ENCODE measurements at regions of chr20 and their contacts with region 1.

Region 1: GRCh38 chr20:48921151-48921898 is at the start of gene ARFGEF2:
- DNase-seq: peak; percentile 79 to 99 (median 84)
- ATAC-seq: peak; percentile 96
- H3K4me3 ChIP-seq: peak within 1 kb of the TSS; percentile 99
- H3K4me3 Mint-ChIP-seq: peak within 1 kb of the TSS; percentile 94 to 100 (median 97)
- H3K27ac ChIP-seq: peak within 1 kb of the TSS; percentile 87
- H3K27ac Mint-ChIP-seq: peak within 1 kb of the TSS; percentile 95 to 99 (median 96)
- H3K4me1 ChIP-seq: peaks cover 20 to 21% of the 10 kb centered on the region in 2 donors
- H3K4me1 Mint-ChIP-seq: peaks cover 42 to 57% (median 55%) of the 10 kb centered on the region in 7 donors
- H3K27me3 ChIP-seq: no peaks in the 10 kb centered on the region
- H3K27me3 Mint-ChIP-seq: peaks cover 0 to 12% (median 0%) of the 10 kb centered on the region in 5 donors
- total RNA-seq, gene ARFGEF2: 24.2 to 33.5 (median 30.1) TPM

Region 2: GRCh38 chr20:47725248-47725973 is 1195.9 kb before region 1 on chr20:
- CTCF ChIA-PET with region 1: no interaction called
- POLR2A ChIA-PET with region 1: no interaction called
- intact Hi-C with region 1: loop called in 1 of 2 experiments (anchors 1 kb)
- DNase-seq: peak; percentile 55 to 92 (median 88)
- ATAC-seq: peak; percentile 75
- H3K4me3 ChIP-seq: no peak overlapping the region
- H3K4me3 Mint-ChIP-seq: peak overlapping the region in 1 of 10 donors; percentile 48
- H3K27ac ChIP-seq: peak overlapping the region; percentile 6
- H3K27ac Mint-ChIP-seq: peak overlapping the region in 8 of 9 donors; percentile 26 to 99 (median 94)
- H3K4me1 ChIP-seq: peaks cover 15 to 34% of the 10 kb centered on the region in 2 donors
- H3K4me1 Mint-ChIP-seq: peaks cover 39 to 51% (median 44%) of the 10 kb centered on the region in 7 donors
- H3K27me3 ChIP-seq: no peaks in the 10 kb centered on the region
- H3K27me3 Mint-ChIP-seq: peaks cover 0 to 2% (median 0%) of the 10 kb centered on the region in 5 donors

Region 3: GRCh38 chr20:48718857-48719578 is 202.3 kb before region 1 on chr20:
- CTCF ChIA-PET with region 1: no interaction called
- POLR2A ChIA-PET with region 1: no interaction called
- intact Hi-C with region 1: loop called in 1 of 2 experiments (anchors 1 kb)
- DNase-seq: peak in 2 of 9 donors; percentile 3 to 31
- ATAC-seq: peak; percentile 42
- H3K4me3 ChIP-seq: peak overlapping the region; percentile 3
- H3K4me3 Mint-ChIP-seq: peak overlapping the region in 5 of 10 donors; percentile 10 to 86 (median 32)
- H3K27ac ChIP-seq: no peak overlapping the region
- H3K27ac Mint-ChIP-seq: peak overlapping the region in 5 of 9 donors; percentile 37 to 84 (median 78)
- H3K4me1 ChIP-seq: peaks cover 47 to 86% of the 10 kb centered on the region in 2 donors
- H3K4me1 Mint-ChIP-seq: peaks cover 45 to 89% (median 65%) of the 10 kb centered on the region in 7 donors
- H3K27me3 ChIP-seq: no peaks in the 10 kb centered on the region
- H3K27me3 Mint-ChIP-seq: no peaks in the 10 kb centered on the region

Region 4: DNA sequence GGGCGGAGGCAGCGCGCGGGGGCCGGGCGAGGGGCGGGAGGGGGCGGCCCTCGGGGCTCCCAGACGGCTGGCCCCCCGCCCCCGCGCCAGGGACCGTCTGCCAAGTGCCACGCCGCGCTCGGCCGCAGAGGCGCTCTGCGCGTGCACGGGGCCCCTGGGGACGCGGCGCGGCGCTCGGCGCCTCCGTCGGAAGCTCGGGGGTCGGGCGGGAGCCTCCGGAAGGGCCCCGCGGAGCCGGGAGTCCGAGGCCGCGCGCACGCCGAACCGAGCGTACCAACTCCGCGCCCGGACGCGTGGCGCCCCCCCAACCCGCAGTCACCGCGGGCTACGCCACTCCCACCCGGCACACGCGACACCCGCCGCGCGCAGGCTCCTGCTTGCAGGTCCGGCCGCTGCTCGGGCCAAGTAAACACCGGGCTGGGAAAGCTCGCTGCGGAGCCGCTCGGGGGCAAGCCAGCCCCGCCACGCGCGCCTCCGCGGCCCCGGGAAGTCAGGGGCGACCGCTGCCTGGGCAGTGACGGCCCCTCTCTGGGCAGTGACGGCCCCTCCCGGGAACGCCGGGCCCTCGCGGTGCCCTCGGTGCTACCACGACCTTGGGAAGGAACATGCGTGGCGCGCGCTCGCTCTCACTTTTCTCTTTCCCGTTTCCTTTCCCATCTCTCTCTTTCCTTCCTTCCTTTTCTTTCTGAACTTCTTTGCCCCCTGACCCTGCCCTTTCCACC is 93.1 kb before region 1 on chr20:
- CTCF ChIA-PET with region 1: no interaction called
- POLR2A ChIA-PET with region 1: no interaction called
- intact Hi-C with region 1: loop called (anchors 2 to 5 kb)
- DNase-seq: peak; percentile 26 to 83 (median 57)
- ATAC-seq: peak; percentile 88
- H3K4me3 ChIP-seq: peak overlapping the region; percentile 38
- H3K4me3 Mint-ChIP-seq: peak overlapping the region; percentile 75 to 87 (median 81)
- H3K27ac ChIP-seq: no peak overlapping the region
- H3K27ac Mint-ChIP-seq: peak overlapping the region in 8 of 9 donors; percentile 39 to 82 (median 64)
- H3K4me1 ChIP-seq: peaks cover 23 to 25% of the 10 kb centered on the region in 2 donors
- H3K4me1 Mint-ChIP-seq: peaks cover 16 to 42% (median 35%) of the 10 kb centered on the region in 7 donors
- H3K27me3 ChIP-seq: no peaks in the 10 kb centered on the region
- H3K27me3 Mint-ChIP-seq: peaks cover 4 to 21% (median 11%) of the 10 kb centered on the region in 5 donors

Region 5: DNA sequence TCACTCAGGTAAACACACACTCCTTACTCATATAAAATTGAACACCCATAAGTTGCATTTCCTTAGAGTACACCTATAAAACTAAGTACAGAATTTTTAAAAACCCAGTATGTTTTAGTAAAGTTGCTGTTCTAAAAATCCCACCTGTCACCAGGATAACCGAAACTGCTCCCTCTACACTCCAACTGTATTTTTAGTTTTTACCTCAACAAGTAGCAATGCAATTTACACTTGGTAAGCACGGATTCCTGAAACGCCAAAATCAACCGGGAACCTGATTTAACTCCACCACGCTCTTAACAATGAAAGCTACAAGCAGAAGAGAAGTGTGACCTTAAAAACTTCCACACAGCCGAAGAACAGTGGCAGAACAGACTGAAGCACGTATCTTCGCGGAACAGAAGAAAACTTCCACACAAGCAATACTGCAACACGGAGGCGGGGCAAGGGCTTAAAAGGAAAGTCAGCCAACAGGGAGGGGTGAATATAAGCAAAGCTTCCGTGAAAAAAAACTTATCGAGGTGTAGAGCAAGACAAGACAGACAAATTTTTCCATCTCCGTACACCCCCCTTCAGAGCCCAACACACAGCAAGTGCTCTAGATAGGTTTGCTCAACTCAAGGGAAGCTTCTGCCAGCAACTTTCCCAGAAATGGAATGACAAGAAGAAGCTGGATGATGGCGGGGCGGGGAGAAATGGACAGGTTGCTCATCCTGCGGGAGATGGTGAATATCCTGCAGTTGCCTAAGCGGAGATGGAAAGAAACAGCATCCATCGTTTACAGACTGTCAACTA is 265.4 kb after region 1 on chr20:
- CTCF ChIA-PET with region 1: no interaction called
- POLR2A ChIA-PET with region 1: no interaction called
- intact Hi-C with region 1: loop called in 1 of 2 experiments (anchors 1 kb)
- DNase-seq: peak; percentile 17 to 85 (median 73)
- ATAC-seq: peak; percentile 33
- H3K4me3 ChIP-seq: peak overlapping the region; percentile 88
- H3K4me3 Mint-ChIP-seq: peak overlapping the region; percentile 88 to 100 (median 94)
- H3K27ac ChIP-seq: peak overlapping the region; percentile 97
- H3K27ac Mint-ChIP-seq: peak overlapping the region; percentile 70 to 96 (median 93)
- H3K4me1 ChIP-seq: peaks cover 18% of the 10 kb centered on the region in 2 donors
- H3K4me1 Mint-ChIP-seq: peaks cover 38 to 56% (median 50%) of the 10 kb centered on the region in 7 donors
- H3K27me3 ChIP-seq: no peaks in the 10 kb centered on the region
- H3K27me3 Mint-ChIP-seq: peaks cover 0 to 7% (median 0%) of the 10 kb centered on the region in 5 donors

Region 6: DNA sequence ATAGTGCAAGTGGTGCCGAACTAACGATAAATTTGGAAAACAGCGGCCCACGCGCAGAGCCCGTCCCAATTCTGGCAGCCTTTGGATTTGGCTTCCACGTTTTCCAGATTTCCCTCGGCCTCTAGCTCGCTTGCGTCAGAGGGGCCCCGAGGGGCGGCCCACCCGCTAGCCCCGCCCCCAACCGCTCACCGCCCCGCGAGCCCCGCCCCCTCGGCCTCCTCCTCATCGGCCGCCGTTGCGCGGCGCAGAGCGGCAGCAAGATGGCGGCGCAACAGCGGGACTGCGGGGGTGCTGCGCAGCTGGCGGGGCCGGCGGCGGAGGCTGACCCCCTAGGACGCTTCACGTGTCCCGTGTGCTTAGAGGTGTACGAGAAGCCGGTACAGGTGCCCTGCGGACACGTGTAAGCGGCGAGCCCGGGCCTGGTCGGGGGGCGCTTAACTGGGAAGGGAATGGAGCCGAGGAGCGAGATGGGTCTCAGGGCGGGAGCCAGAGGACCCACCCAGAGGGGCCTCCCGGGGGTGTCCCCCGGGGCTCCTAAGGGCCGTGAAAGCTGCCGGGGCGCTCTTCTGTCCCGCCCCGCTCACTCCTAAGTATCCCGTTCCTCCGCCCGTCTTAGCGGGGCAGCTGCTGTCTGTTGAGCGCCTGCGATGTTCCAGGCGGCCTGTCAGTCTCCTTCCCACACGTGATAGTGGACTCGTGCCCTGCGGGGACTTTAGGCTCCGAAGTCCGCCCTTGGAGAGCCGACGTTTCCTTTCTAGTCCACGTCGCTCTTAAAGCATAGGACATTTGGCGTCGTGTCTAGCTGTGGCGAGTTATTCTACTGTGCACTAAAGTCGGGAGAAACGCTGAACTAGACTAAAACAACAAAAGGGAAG is 1015.1 kb after region 1 on chr20 and contains the start of gene RNF114:
- CTCF ChIA-PET with region 1: no interaction called
- POLR2A ChIA-PET with region 1: no interaction called
- intact Hi-C with region 1: loop called in 1 of 2 experiments (anchors 10 kb)
- DNase-seq: peak; percentile 79 to 92 (median 86)
- ATAC-seq: peak; percentile 99
- H3K4me3 ChIP-seq: peak within 1 kb of the TSS; percentile 90
- H3K4me3 Mint-ChIP-seq: peak within 1 kb of the TSS; percentile 95 to 100 (median 98)
- H3K27ac ChIP-seq: peak within 1 kb of the TSS; percentile 95
- H3K27ac Mint-ChIP-seq: peak within 1 kb of the TSS; percentile 83 to 98 (median 95)
- H3K4me1 ChIP-seq: peaks cover 20 to 27% of the 10 kb centered on the region in 2 donors
- H3K4me1 Mint-ChIP-seq: peaks cover 36 to 61% (median 53%) of the 10 kb centered on the region in 7 donors
- H3K27me3 ChIP-seq: no peaks in the 10 kb centered on the region
- H3K27me3 Mint-ChIP-seq: no peaks in the 10 kb centered on the region
- total RNA-seq, gene RNF114: 67.1 to 113 (median 101) TPM